Mammary epithelial cell (primary cell): ENCODE measurements at regions of chr11 and their contacts with region 1.

Region 1: GRCh38 chr11:6127881-6128280 is 20.4 kb downstream of the OR56B4 start:
- DNase-seq: peak; percentile 40
- H3K4me3 ChIP-seq: no peak overlapping the region
- H3K27ac ChIP-seq: no peak overlapping the region
- H3K4me1 ChIP-seq: no peaks in the 10 kb centered on the region
- H3K27me3 ChIP-seq: no peaks in the 10 kb centered on the region
- CTCF ChIP-seq: no peak

Region 2: GRCh38 chr11:6052374-6052773 is 75.5 kb before region 1 on chr11:
- CTCF ChIA-PET with region 1: no interaction called
- dilution Hi-C with region 1: loop called (anchors 5 kb)
- in situ Hi-C with region 1: no loop called
- intact Hi-C with region 1: no loop called
- DNase-seq: no peak
- H3K4me3 ChIP-seq: no peak overlapping the region
- H3K27ac ChIP-seq: no peak overlapping the region
- H3K4me1 ChIP-seq: no peaks in the 10 kb centered on the region
- H3K27me3 ChIP-seq: no peaks in the 10 kb centered on the region
- CTCF ChIP-seq: no peak

Region 3: GRCh38 chr11:6285019-6285418 is 157.1 kb after region 1 on chr11:
- CTCF ChIA-PET with region 1: no interaction called
- dilution Hi-C with region 1: no loop called
- in situ Hi-C with region 1: no loop called
- intact Hi-C with region 1: no loop called
- DNase-seq: no peak
- H3K4me3 ChIP-seq: no peak overlapping the region
- H3K27ac ChIP-seq: no peak overlapping the region
- H3K4me1 ChIP-seq: peaks cover 16% of the 10 kb centered on the region
- H3K27me3 ChIP-seq: no peaks in the 10 kb centered on the region
- CTCF ChIP-seq: no peak